ENCODE measurements at regions of chr4 and their contacts with region 1.

Region 1: GRCh38 chr4:17027495-17027894 is 129.1 kb upstream of the LDB2 start:
- DNase-seq: no peak
- ATAC-seq: no peak

Region 2: DNA sequence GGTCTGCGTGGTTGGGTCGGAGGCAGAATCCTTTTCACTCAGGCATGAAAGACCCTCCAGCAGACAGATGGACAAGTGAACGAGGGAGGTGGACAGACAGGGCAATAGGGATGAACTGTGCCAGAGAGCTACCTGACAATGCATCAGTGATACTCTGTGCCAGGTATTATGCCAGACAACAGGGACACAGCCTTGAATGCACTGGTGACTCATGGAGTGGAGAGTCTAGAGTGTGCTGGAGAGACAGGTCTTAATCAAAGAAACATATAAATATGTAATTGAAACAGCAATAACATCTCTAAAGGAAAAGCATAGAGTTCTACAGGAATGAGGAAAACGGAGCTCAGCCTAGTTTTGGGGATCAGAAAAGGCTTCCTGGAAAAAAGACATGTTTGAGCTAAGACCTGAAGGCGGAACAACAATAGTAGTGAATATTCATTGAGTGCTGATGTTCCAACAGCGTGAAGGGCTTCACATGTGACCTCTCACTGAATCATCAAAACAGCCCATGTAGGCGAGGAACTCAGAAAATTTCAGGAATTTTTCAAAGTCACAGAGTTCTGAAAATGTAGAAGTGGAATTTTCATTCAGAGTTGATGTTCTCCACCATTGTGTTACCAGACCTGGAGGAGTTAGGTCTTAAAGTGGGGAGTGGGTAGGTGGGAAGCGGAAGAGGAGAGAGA is 1044.5 kb before region 1 on chr4:
- intact Hi-C with region 1: loop called (anchors 5 kb)
- DNase-seq: no peak
- ATAC-seq: no peak

Region 3: DNA sequence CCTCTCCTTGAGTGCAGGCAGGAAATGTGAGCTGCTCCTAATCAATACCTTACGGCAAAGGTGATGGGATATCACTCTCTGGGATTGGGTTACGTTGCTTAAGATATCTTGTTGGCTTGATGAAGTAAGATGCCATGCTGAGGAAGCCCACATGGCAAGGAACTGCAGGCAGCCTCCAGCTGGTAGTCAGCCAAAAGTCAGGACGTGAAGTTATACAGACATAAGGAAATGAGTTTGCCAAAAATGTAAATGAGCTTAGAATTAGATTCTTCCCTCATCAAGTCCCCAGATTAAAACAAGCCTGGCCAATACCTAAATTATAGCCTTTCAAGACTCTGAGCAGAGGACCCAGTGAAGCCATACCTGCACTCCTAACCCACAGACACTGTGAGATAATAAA is 329.4 kb after region 1 on chr4:
- intact Hi-C with region 1: no loop called
- DNase-seq: no peak
- ATAC-seq: no peak